Endothelial cell of umbilical vein (primary cell): ENCODE measurements at regions of chr2 and their contacts with region 1.

Region 1: DNA sequence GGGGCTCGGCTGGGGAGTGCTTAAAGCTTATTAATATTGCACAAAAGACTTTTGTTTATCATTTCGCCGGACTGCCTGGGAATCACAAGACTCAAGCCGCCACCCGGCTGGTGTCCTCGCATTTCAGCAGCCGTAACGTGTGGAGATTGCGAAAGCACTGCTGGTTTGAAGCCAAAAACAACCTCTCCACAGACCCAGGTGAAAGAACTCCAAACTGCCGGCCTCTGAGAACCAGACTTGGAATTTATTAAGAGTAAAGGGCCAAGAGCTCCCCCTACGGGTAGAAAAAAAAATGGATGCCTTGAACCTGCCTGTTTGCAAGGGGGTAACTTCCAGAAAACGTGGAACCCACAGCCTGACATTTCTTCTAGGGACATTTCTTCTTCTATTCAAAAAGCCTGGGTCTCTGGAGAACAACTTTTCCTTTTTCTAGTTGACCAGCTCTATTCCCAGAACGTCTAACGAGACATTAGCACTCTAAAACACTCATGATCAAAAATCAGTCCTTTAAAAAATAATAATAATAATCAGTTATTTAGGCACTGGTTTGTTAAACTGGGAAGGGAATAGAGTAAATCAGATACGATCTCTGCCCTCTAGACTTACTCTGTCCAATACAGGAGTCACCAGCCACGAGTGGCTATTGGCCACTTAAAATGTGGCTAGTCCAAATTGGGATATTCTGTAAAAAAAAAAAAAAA is 216.3 kb downstream of the C1D start:
- DNase-seq: peak; percentile 96
- H3K4me3 ChIP-seq: peak overlapping the region in 1 of 3 experiments; percentile 14
- H3K27ac ChIP-seq: peak overlapping the region; percentile 44
- H3K4me1 ChIP-seq: peaks cover 6% of the 10 kb centered on the region
- H3K27me3 ChIP-seq: no peaks in the 10 kb centered on the region
- CTCF ChIP-seq: peak; percentile 68 to 71
- POLR2A ChIP-seq: no peak

Region 2: GRCh38 chr2:67733517-67733916 is 113.0 kb before region 1 on chr2:
- CTCF ChIA-PET with region 1: interaction called, 211 read pairs
- POLR2A ChIA-PET with region 1: no interaction called
- dilution Hi-C with region 1: no loop called
- intact Hi-C with region 1: loop called (anchors 1 kb)
- DNase-seq: peak; percentile 55
- H3K4me3 ChIP-seq: no peak overlapping the region
- H3K27ac ChIP-seq: no peak overlapping the region
- H3K4me1 ChIP-seq: no peaks in the 10 kb centered on the region
- H3K27me3 ChIP-seq: no peaks in the 10 kb centered on the region
- CTCF ChIP-seq: peak; percentile 32 to 82
- POLR2A ChIP-seq: no peak

Region 3: DNA sequence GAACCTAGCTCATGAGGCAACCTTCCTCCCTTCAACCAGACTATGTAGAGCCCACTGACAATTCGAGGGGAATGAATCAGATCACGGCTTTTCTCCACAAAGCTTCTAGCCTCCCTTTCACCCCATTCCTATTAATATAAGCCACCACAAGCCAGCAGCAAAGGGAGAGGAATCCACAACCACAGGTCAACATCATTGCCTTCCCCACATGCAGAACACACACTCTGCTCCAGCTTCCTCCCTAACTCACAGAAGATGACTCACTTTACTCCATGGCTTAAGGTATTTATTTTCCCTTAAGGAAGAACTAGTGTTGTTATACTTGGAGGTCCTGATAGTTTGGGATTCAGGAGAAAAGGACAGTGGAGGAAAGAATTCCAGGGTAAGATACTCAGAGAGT is 55.9 kb before region 1 on chr2:
- CTCF ChIA-PET with region 1: no interaction called
- POLR2A ChIA-PET with region 1: no interaction called
- dilution Hi-C with region 1: no loop called
- intact Hi-C with region 1: no loop called
- DNase-seq: peak; percentile 30
- H3K4me3 ChIP-seq: no peak overlapping the region
- H3K27ac ChIP-seq: no peak overlapping the region
- H3K4me1 ChIP-seq: peaks cover 2% of the 10 kb centered on the region
- H3K27me3 ChIP-seq: no peaks in the 10 kb centered on the region
- CTCF ChIP-seq: no peak
- POLR2A ChIP-seq: no peak

Region 4: GRCh38 chr2:67871686-67872412 is 25.3 kb after region 1 on chr2:
- CTCF ChIA-PET with region 1: interaction called, 33 read pairs
- POLR2A ChIA-PET with region 1: no interaction called
- dilution Hi-C with region 1: no loop called
- intact Hi-C with region 1: loop called (anchors 1 kb)
- DNase-seq: peak; percentile 84
- H3K4me3 ChIP-seq: peak overlapping the region in 1 of 3 experiments; percentile 37
- H3K27ac ChIP-seq: peak overlapping the region; percentile 100
- H3K4me1 ChIP-seq: peaks cover 38% of the 10 kb centered on the region
- H3K27me3 ChIP-seq: no peaks in the 10 kb centered on the region
- CTCF ChIP-seq: no peak
- POLR2A ChIP-seq: no peak

Region 5: GRCh38 chr2:67917332-67918054 is 71.0 kb after region 1 on chr2:
- CTCF ChIA-PET with region 1: interaction called, 11 read pairs
- POLR2A ChIA-PET with region 1: no interaction called
- dilution Hi-C with region 1: no loop called
- intact Hi-C with region 1: loop called (anchors 1 kb)
- DNase-seq: peak; percentile 90
- H3K4me3 ChIP-seq: no peak overlapping the region
- H3K27ac ChIP-seq: peak overlapping the region; percentile 96
- H3K4me1 ChIP-seq: peaks cover 28% of the 10 kb centered on the region
- H3K27me3 ChIP-seq: no peaks in the 10 kb centered on the region
- CTCF ChIP-seq: no peak
- POLR2A ChIP-seq: no peak

Region 6: DNA sequence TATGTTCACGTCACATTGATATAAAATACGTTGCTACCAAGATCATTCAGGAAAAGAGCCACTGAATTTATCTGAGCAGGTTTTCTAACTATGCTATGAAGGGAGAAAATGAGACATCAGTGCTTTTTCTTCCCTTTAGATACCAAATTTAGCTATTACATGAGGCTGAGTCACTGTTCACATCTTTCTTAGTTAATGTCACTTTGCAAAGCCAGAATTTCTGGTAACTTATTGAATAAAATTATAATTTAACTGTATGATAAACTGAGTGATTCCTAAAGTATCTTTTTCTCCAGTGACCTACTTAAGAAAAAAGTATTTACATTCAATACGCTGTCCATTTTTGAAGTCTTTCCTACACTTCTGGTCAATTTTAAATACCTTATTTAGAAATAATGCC is 193.6 kb after region 1 on chr2:
- CTCF ChIA-PET with region 1: interaction called, 78 read pairs
- POLR2A ChIA-PET with region 1: no interaction called
- dilution Hi-C with region 1: no loop called
- intact Hi-C with region 1: no loop called
- DNase-seq: no peak
- H3K4me3 ChIP-seq: no peak overlapping the region
- H3K27ac ChIP-seq: no peak overlapping the region
- H3K4me1 ChIP-seq: peaks cover 4% of the 10 kb centered on the region
- H3K27me3 ChIP-seq: no peaks in the 10 kb centered on the region
- CTCF ChIP-seq: no peak
- POLR2A ChIP-seq: no peak

Region 7: GRCh38 chr2:68330691-68331090 is 484.2 kb after region 1 on chr2:
- CTCF ChIA-PET with region 1: no interaction called
- POLR2A ChIA-PET with region 1: no interaction called
- dilution Hi-C with region 1: no loop called
- intact Hi-C with region 1: no loop called
- DNase-seq: peak; percentile 40
- H3K4me3 ChIP-seq: no peak overlapping the region
- H3K27ac ChIP-seq: no peak overlapping the region
- H3K4me1 ChIP-seq: no peaks in the 10 kb centered on the region
- H3K27me3 ChIP-seq: no peaks in the 10 kb centered on the region
- CTCF ChIP-seq: no peak
- POLR2A ChIP-seq: no peak